ENCODE measurements at regions of chr12 and their contacts with region 1.

Region 1: DNA sequence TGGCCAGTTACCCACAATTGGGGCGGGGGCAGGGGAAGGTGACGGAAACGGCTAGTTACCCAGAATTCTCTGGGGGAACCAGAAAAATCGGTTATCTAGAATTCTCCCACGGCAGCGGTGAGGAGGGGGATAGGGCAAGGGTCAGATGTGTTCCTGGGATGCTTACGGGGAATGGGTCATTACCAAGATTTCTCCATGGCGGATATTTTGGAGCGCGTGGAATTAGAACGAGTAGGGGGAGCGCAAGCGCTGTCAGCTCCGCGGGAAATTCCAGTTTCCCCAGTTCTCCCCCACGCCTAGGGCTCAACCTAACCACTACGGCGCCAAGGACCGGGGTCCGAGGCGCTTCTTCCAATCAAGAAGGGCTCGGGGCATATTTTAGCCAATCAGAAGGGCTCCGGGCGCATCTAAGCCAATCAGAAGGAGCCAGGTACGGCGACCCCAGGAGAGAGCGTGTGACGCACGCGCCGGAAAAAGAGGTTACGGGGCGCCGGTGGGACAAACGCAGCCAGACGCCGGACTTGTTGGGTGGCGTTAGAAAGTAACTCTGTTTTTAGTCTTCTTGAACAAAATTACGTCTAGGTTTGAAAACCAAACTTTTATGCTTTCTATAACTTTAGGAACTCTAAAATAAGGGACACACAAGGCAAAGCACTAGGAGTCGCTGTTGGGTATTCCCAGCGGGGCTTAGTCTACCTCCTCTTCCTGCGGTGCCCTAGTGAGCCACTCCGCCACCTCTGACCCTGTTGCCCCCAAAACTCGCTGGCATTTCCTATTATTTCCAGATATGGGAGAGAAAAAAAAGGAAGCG is at the start of gene PAN2:
- DNase-seq: peak; percentile 93
- H3K4me3 Mint-ChIP-seq: peak within 1 kb of the TSS; percentile 96
- H3K27ac Mint-ChIP-seq: peak within 1 kb of the TSS; percentile 100
- H3K4me1 Mint-ChIP-seq: peaks cover 38% of the 10 kb centered on the region
- H3K27me3 Mint-ChIP-seq: no peaks in the 10 kb centered on the region
- total RNA-seq, gene PAN2: 28.7 and 28.9 TPM in 2 replicates

Region 2: GRCh38 chr12:56084958-56085543 is 248.8 kb before region 1 on chr12:
- intact Hi-C with region 1: no loop called
- DNase-seq: no peak
- H3K4me3 Mint-ChIP-seq: no peak overlapping the region
- H3K27ac Mint-ChIP-seq: no peak overlapping the region
- H3K4me1 Mint-ChIP-seq: peaks cover 1% of the 10 kb centered on the region
- H3K27me3 Mint-ChIP-seq: peaks cover 28% of the 10 kb centered on the region

Region 3: GRCh38 chr12:56172831-56173230 is 161.1 kb before region 1 on chr12:
- intact Hi-C with region 1: no loop called
- DNase-seq: no peak
- H3K4me3 Mint-ChIP-seq: no peak overlapping the region
- H3K27ac Mint-ChIP-seq: no peak overlapping the region
- H3K4me1 Mint-ChIP-seq: no peaks in the 10 kb centered on the region
- H3K27me3 Mint-ChIP-seq: no peaks in the 10 kb centered on the region

Region 4: DNA sequence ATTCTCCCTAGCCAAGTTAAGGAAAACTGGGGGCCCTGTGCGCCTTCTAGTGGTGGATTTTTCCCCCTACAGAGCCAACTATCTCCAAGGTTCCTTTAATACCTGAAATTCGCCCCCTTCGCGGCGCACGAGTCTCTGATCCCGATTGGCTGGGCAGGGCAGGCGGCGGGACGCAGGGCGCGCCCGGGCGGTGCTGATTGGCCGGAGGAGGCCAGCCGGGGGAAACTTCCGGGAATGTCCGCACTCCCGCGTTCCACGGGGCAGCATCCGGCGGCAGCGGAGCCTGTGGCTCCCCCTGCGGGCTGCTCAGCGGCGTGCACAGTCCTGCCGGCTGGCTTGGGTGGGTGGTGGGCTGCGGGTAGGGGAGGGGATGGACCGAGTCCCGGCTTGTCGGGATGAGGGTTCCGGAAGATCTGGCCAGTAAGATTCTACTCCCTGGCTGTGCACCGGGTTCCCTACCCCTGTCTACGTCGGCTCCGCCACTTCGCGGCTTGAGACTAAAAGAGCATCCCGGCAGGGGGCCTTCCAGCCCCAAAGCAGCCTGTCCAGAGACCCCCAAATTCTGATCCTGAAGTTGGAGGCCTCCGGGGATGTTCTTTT is 109.7 kb before region 1 on chr12 and contains the start of gene NABP2:
- intact Hi-C with region 1: loop called (anchors 5 kb)
- DNase-seq: peak; percentile 94
- H3K4me3 Mint-ChIP-seq: peak within 1 kb of the TSS; percentile 99
- H3K27ac Mint-ChIP-seq: peak within 1 kb of the TSS; percentile 76
- H3K4me1 Mint-ChIP-seq: peaks cover 41% of the 10 kb centered on the region
- H3K27me3 Mint-ChIP-seq: no peaks in the 10 kb centered on the region
- total RNA-seq, gene NABP2: 77.3 and 86.8 TPM in 2 replicates

Region 5: GRCh38 chr12:56299853-56300643 is 33.8 kb before region 1 on chr12 and contains the start of gene CS:
- intact Hi-C with region 1: loop called (anchors 1 kb)
- DNase-seq: peak; percentile 98
- H3K4me3 Mint-ChIP-seq: peak within 1 kb of the TSS; percentile 95
- H3K27ac Mint-ChIP-seq: peak within 1 kb of the TSS; percentile 94
- H3K4me1 Mint-ChIP-seq: peaks cover 45% of the 10 kb centered on the region
- H3K27me3 Mint-ChIP-seq: no peaks in the 10 kb centered on the region
- total RNA-seq, gene CS: 250 and 253 TPM in 2 replicates

Region 6: GRCh38 chr12:56359851-56360767 is 26.2 kb after region 1 on chr12 and contains the start of gene STAT2:
- intact Hi-C with region 1: loop called (anchors 1 kb)
- DNase-seq: peak; percentile 100
- H3K4me3 Mint-ChIP-seq: peak within 1 kb of the TSS; percentile 89
- H3K27ac Mint-ChIP-seq: peak within 1 kb of the TSS; percentile 90
- H3K4me1 Mint-ChIP-seq: peaks cover 24% of the 10 kb centered on the region
- H3K27me3 Mint-ChIP-seq: no peaks in the 10 kb centered on the region
- total RNA-seq, gene STAT2: 70.3 and 75.0 TPM in 2 replicates

Region 7: DNA sequence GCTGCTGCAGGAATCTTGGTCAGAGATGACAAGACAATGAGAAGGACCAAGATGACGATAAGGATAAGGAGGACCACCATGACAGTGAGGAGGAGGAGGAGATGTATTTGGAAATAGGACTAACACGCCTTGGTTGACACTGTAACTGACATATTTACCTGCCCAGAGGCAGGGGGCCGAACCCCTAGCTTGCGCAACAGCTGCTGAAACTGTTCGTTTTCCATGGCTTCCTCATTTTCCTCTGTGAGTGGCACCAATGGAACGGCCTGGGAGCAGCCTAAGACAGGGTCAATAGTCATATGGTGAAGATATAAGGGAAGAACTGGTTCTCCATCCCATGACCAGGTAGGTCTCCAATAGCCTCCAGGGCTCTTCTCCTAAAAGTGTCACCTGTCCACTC is 86.5 kb after region 1 on chr12:
- intact Hi-C with region 1: no loop called
- DNase-seq: no peak
- H3K4me3 Mint-ChIP-seq: no peak overlapping the region
- H3K27ac Mint-ChIP-seq: no peak overlapping the region
- H3K4me1 Mint-ChIP-seq: peaks cover 5% of the 10 kb centered on the region
- H3K27me3 Mint-ChIP-seq: no peaks in the 10 kb centered on the region

Region 8: GRCh38 chr12:56468216-56469006 is 134.5 kb after region 1 on chr12 and contains the start of gene SPRYD4:
- intact Hi-C with region 1: loop called (anchors 2 kb)
- DNase-seq: peak; percentile 93
- H3K4me3 Mint-ChIP-seq: peak within 1 kb of the TSS; percentile 98
- H3K27ac Mint-ChIP-seq: peak within 1 kb of the TSS; percentile 98
- H3K4me1 Mint-ChIP-seq: peaks cover 18% of the 10 kb centered on the region
- H3K27me3 Mint-ChIP-seq: no peaks in the 10 kb centered on the region
- total RNA-seq, gene SPRYD4: 4.4 and 4.5 TPM in 2 replicates

Measured in activated T-helper 2 cell treated with anti-CD3 and anti-CD28 coated beads, Interferon-gamma antibody, Interleukin-2, Interleukin-4, amounts not matched to agents 10 μg/mL and 5 μg/mL and 100 μg/mL, durations not matched to agents 14 hours and 24 hours and 36 hours (primary cell).